Adrenal gland (tissue), 19 donors: ENCODE measurements at regions of chr2 and their contacts with region 1.

Region 1: GRCh38 chr2:231104115-231104713 is 20.6 kb downstream of the HTR2B start:
- DNase-seq: peak; percentile 56 to 94 (median 81)
- H3K4me3 ChIP-seq: no peak overlapping the region
- H3K27ac ChIP-seq: peak overlapping the region; percentile 19 to 79 (median 69)
- H3K4me1 ChIP-seq: peaks cover 9 to 30% of the 10 kb centered on the region in 2 donors
- H3K27me3 ChIP-seq: no peaks in the 10 kb centered on the region
- CTCF ChIP-seq: peak; percentile 78 to 96 (median 93)
- POLR2A ChIP-seq: peak in 1 of 2 donors; percentile 9

Region 2: DNA sequence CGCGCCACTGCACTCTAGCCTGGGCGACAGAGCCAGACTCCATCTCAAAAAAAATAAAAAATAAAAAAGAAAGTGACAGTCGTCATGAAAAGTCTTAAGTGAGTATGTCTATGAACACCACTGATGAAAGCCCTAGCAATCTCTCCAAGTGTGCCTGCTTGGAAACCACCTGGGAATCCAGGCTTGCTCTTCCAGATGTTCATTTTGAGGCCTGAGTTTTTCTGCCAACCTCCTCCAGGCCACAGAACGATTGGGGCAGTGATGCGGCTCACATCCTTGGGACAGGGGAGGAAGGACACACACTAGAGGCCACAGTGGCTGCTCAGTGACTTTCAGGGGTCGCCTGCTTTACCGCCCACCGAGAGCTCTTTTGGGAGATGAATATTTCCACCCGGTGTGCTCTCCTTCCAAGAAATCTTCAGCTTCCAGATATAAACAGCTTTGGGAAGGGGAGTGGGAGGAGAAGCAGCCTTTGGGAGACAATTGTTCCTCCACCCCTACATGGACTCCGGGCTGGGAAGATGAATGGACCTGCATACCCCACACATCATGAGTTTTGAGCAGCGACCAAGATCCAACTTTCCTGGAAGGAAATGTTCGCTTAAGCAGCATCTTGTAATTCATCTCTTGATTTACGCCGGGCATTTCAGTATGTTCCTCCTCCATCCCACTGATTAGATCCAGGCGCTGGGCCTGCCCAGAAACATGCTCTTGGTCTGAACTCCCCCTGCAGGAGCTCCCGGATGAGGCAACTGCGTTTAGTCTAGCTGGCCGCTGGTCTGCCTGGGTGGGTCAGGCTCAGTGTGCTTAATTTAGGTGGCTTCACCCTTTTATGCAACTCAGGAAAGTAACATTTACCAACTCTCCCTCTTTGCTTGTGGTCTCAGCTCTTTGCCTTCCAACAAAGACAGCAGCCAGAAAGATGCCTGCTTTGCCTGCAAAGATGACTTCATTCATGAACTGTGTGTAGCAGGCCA is 88.0 kb after region 1 on chr2:
- intact Hi-C with region 1: loop called (anchors 5 to 10 kb)
- DNase-seq: peak; percentile 76 to 93 (median 86)
- H3K4me3 ChIP-seq: no peak overlapping the region
- H3K27ac ChIP-seq: peak overlapping the region; percentile 25 to 96 (median 90)
- H3K4me1 ChIP-seq: peaks cover 27 to 46% of the 10 kb centered on the region in 2 donors
- H3K27me3 ChIP-seq: no peaks in the 10 kb centered on the region
- CTCF ChIP-seq: peak; percentile 16 to 83 (median 70)
- POLR2A ChIP-seq: no peak

Region 3: DNA sequence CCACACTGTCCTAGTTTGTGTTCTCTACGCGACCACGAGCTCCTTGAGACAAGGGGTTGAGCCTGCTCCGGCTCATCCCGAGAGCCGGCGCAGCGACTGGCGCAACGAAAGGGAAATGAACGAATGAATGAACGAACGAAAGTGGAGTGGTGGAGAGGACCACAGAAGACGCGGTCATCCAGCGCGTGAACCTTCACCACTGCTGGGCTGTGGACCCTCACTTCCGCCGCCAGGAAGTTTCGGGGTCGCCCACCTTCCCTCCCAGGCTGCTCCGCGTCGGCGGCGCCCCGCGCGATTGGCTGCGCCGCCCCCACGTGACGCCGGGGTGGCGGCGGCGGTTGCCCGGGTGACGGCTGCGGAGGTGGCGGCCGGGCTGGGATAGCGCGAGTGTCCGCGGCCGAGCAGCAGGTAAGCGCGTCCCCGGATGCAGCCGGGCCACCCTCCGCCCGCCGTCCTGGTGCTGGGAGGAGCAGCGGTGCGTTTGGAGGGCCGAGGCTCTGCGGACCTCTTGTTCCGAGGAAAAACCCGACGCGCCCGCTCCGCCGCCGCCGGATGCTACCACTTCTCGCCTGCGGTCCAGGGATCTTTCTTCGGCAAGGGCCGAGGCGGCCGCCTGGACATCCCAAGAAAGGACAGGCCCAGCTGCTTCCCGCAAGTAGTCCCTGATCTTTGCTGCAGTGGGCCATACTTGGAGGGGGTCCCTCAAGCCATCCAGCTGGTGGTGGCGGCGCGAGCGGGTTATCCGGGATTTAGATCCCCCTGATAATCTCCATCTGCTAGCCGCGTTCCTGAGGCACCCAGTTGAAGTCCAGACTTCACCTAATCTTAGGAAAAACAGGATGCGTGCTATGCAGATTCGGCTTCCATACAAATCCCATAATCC is 94.3 kb after region 1 on chr2 and contains the start of gene ARMC9:
- intact Hi-C with region 1: loop called (anchors 5 to 10 kb)
- DNase-seq: peak; percentile 74 to 83 (median 79)
- H3K4me3 ChIP-seq: peak within 1 kb of the TSS; percentile 44 to 87 (median 76)
- H3K27ac ChIP-seq: peak within 1 kb of the TSS in 4 of 5 donors; percentile 43 to 78 (median 62)
- H3K4me1 ChIP-seq: peaks cover 6 to 28% of the 10 kb centered on the region in 2 donors
- H3K27me3 ChIP-seq: no peaks in the 10 kb centered on the region
- CTCF ChIP-seq: peak in 1 of 6 experiments; percentile 1
- POLR2A ChIP-seq: peak; percentile 48 to 67
- total RNA-seq, gene ARMC9: 22.5 to 109 (median 59.0) TPM

Region 4: GRCh38 chr2:231411831-231412617 is 307.8 kb after region 1 on chr2:
- intact Hi-C with region 1: loop called in 1 of 2 experiments (anchors 10 kb)
- DNase-seq: peak; percentile 89 to 96 (median 93)
- H3K4me3 ChIP-seq: peak overlapping the region in 3 of 4 donors; percentile 39 to 79 (median 44)
- H3K27ac ChIP-seq: peak overlapping the region in 4 of 5 donors; percentile 46 to 92 (median 74)
- H3K4me1 ChIP-seq: peaks cover 6 to 17% of the 10 kb centered on the region in 2 donors
- H3K27me3 ChIP-seq: no peaks in the 10 kb centered on the region
- CTCF ChIP-seq: peak; percentile 81 to 92 (median 85)
- POLR2A ChIP-seq: no peak

Region 5: DNA sequence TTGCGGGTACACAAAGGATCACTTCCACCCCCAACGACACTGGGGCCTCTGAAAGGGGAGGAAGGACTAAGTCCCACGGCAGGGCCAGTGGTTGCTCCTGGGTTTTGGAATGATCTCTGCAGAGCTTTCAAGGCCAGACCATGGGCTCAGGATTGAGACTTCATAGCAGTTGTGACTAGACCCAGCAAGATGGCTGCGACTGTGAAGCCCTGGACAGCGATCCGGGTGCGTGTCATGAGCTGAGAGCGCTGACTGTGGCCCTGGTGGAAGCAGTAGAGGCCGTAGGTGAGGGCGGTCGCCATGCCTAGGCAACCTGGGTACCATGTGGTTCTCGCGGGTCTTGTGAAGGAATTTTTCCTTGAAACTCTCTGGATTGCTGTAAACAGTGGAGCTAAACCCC is 332.7 kb after region 1 on chr2:
- intact Hi-C with region 1: loop called in 1 of 2 experiments (anchors 10 kb)
- DNase-seq: no peak
- H3K4me3 ChIP-seq: no peak overlapping the region
- H3K27ac ChIP-seq: no peak overlapping the region
- H3K4me1 ChIP-seq: no peaks in the 10 kb centered on the region
- H3K27me3 ChIP-seq: no peaks in the 10 kb centered on the region
- CTCF ChIP-seq: no peak
- POLR2A ChIP-seq: no peak